Naive thymus-derived CD4-positive, alpha-beta T cell (primary cell): ENCODE measurements at regions of chr9 and their contacts with region 1.

Region 1: GRCh38 chr9:95494416-95495371 is 22.1 kb downstream of the PTCH1 start:
- DNase-seq: peak; percentile 58 to 93 (median 90)
- ATAC-seq: peak; percentile 97
- H3K4me3 ChIP-seq: peak overlapping the region; percentile 67
- H3K4me3 Mint-ChIP-seq: peak overlapping the region; percentile 75 to 94 (median 89)
- H3K27ac ChIP-seq: peak overlapping the region; percentile 63
- H3K27ac Mint-ChIP-seq: peak overlapping the region; percentile 80 to 99 (median 94)
- H3K4me1 ChIP-seq: peaks cover 56 to 59% of the 10 kb centered on the region in 2 donors
- H3K4me1 Mint-ChIP-seq: peaks cover 34 to 81% (median 70%) of the 10 kb centered on the region in 7 donors
- H3K27me3 ChIP-seq: no peaks in the 10 kb centered on the region
- H3K27me3 Mint-ChIP-seq: peaks cover 0 to 42% (median 0%) of the 10 kb centered on the region in 5 donors

Region 2: DNA sequence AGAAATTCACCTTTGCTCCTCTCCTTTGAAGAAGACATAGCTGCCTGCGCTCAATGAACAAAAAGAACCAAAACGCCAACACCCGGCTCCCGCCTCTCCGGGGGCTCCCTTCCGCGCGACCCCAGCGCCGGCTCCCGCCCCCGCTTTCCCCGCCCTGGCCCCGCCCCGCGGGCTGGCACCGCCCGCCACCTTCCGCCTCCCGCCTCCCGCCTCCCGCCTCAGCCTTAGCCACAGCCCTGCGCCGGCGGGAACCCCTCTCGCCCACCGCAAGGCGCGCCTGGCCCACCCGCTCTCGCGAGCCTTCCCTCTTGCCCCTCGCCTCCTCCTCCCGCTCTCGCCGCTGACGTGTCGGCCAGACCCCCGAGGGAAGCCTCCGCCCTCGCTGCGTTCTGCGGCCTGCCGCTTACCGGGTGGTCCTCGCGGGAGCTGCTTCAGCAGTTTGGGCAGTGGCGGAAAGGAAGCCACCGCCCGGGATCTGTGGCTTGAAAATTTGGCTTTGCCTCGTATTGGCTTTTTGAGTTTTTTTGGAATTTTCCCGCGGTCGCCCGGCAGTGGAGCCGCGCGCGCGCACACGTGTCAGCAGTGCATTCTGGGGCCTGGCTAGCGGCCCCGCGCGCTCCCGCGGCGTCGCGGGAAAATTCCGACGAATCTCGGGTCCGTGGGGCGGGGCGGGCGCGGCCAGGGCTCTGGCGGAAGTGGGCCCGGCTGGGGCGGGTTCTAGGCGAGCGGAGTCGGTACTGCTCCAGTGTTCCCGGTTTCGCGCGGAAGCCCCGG is 177.4 kb before region 1 on chr9 and contains the start of gene FANCC:
- CTCF ChIA-PET with region 1: no interaction called
- POLR2A ChIA-PET with region 1: no interaction called
- intact Hi-C with region 1: loop called (anchors 5 kb)
- DNase-seq: peak; percentile 74 to 89 (median 81)
- ATAC-seq: peak; percentile 94
- H3K4me3 ChIP-seq: peak within 1 kb of the TSS; percentile 85
- H3K4me3 Mint-ChIP-seq: peak within 1 kb of the TSS; percentile 78 to 95 (median 92)
- H3K27ac ChIP-seq: peak within 1 kb of the TSS; percentile 91
- H3K27ac Mint-ChIP-seq: peak within 1 kb of the TSS; percentile 75 to 95 (median 89)
- H3K4me1 ChIP-seq: peaks cover 3 to 7% of the 10 kb centered on the region in 2 donors
- H3K4me1 Mint-ChIP-seq: peaks cover 8 to 33% (median 23%) of the 10 kb centered on the region in 7 donors
- H3K27me3 ChIP-seq: no peaks in the 10 kb centered on the region
- H3K27me3 Mint-ChIP-seq: peaks cover 0 to 26% (median 0%) of the 10 kb centered on the region in 5 donors
- total RNA-seq, gene FANCC: 5.7 to 14.6 (median 7.9) TPM

Region 3: DNA sequence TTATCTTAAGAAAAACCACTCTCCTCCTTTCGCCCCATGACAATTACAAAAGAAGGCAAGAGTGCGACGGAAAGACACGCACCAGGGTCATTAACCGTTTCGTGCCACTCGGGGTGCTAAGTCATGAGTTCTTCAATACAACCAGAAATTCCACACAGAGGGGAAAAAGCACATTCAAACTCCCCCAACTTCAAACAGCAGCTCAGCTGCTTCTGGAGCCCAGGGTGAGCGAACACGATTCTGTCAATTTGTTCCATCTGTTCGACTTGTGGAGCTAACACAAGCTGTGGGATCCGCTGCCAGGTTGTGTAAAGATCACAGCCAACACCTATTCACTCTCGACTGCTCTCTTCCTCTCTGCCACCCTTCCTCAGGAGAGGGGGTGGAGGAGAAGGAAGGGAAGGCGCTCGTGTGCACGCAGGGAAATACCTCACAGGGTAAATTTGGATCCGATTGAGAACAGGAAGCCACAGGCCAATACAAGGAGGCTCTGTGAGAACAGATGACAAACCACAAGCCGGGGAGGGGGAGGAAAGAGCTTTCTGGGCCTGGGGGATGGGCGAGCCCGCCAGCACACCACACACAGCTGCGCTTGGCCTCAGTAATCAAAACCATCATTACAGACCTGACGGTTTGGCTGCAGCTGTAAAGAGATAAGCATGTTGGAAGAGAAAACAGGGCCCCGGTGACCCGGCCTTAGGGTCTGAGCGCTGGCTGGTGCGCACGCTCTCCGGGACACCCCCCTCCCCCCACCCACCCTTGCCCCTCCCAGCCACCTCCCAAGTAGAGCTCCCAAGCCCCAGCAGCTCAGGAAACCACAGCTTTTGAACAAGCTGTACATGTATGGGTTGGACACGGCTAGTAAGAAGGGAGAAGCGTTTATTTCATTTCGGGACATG is 32.2 kb before region 1 on chr9:
- CTCF ChIA-PET with region 1: interaction called, 3 read pairs
- POLR2A ChIA-PET with region 1: interaction called, 5 read pairs
- intact Hi-C with region 1: loop called (anchors 1 kb)
- DNase-seq: peak; percentile 47 to 91 (median 86)
- ATAC-seq: peak; percentile 98
- H3K4me3 ChIP-seq: peak overlapping the region; percentile 45
- H3K4me3 Mint-ChIP-seq: peak overlapping the region; percentile 80 to 91 (median 85)
- H3K27ac ChIP-seq: no peak overlapping the region
- H3K27ac Mint-ChIP-seq: peak overlapping the region; percentile 25 to 92 (median 76)
- H3K4me1 ChIP-seq: peaks cover 24 to 26% of the 10 kb centered on the region in 2 donors
- H3K4me1 Mint-ChIP-seq: peaks cover 22 to 53% (median 44%) of the 10 kb centered on the region in 7 donors
- H3K27me3 ChIP-seq: no peaks in the 10 kb centered on the region
- H3K27me3 Mint-ChIP-seq: peaks cover 0 to 59% (median 0%) of the 10 kb centered on the region in 5 donors

Region 4: DNA sequence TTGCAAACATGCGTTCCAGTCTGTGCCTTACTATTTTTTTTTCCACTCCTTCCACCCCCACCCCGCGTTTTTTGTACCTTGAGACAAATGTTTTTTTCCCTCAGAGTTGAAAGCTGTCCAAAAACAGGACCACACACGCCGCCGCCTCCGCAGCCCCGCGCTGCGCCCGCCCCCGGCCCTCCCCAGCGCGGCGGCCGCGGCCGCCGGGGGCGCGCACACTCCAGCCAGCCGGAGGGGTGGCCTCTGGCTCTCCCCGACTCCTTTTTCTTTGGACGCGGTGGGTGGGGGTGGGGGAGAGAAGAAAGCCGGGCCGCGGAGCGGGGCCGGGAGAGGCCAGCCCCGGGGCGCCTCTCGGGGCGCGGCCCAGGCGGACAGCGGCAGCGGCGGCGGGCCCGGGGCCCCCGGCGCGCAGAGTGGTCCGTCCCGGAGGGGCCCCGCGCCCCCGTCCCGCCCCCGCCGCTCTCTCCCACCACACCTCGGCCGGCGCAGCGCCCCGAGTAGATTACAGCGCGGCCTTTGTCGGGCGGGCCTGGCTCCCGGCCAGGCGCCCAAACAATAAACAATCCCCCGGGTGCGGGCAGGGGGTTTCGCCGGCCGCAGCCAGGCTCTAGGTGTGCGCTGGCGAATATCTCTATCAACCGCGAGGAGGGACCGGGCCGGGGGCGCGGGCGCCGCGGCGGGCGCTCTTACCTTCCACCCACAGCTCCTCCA is 11.2 kb after region 1 on chr9:
- CTCF ChIA-PET with region 1: interaction called, 6 read pairs
- POLR2A ChIA-PET with region 1: interaction called, 13 read pairs
- intact Hi-C with region 1: loop called (anchors 1 kb)
- DNase-seq: peak in 2 of 9 donors; percentile 12 to 38
- ATAC-seq: no peak
- H3K4me3 ChIP-seq: peak overlapping the region; percentile 95
- H3K4me3 Mint-ChIP-seq: peak overlapping the region; percentile 89 to 100 (median 96)
- H3K27ac ChIP-seq: peak overlapping the region; percentile 54
- H3K27ac Mint-ChIP-seq: peak overlapping the region; percentile 53 to 92 (median 78)
- H3K4me1 ChIP-seq: peaks cover 7 to 16% of the 10 kb centered on the region in 2 donors
- H3K4me1 Mint-ChIP-seq: peaks cover 31 to 60% (median 56%) of the 10 kb centered on the region in 7 donors
- H3K27me3 ChIP-seq: no peaks in the 10 kb centered on the region
- H3K27me3 Mint-ChIP-seq: peaks cover 0 to 76% (median 3%) of the 10 kb centered on the region in 5 donors